ENCODE measurements at regions of chr5 and their contacts with region 1.

Region 1: DNA sequence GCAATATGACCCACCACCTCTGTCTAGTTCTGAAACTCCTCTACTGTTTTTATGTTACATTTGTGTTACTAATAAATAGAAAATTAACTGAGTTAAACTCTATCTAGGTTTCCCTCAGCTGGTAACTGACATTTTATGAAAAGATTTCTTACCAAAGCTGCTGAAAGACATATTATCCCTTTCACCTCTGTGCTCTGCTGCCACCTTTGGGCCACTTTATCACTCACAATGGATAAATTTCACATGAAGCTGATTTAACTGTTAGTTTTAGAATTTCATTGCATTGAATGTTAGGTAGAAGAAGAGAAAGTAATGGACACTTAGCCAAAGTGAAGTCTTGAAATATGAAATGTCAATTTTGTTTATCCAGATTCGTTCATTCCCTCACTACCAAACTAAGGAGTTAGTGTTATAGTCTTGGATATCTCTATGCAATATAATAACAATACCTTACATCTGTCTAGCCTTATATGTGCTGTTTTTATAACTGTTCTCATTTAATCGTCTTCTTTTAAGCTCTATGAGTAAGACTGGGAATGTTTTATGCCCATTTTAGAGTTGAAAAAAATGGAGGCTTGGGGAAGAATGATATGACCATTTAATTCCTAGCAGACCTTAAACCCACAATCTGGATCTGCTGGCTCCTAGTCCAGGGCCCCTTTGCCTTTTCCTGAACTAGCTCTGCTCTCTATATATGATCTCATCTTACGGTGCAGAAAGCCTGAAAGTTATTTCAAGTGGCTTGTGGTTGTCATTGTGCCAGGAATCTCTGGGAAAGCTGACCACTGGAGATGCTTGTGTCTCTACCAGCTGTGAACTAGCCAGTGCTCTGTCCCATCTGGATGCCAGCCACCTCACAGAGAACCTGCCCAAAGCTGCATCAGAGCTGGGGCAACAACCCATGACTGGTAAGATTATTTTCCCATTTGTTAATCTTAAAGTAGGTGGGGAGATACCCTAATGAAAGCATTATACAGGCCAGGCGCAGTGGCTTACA is 97.1 kb downstream of the GOLPH3 start:
- DNase-seq: peak; percentile 52
- H3K27ac ChIP-seq: no peak overlapping the region
- CTCF ChIP-seq: peak; percentile 95

Region 2: DNA sequence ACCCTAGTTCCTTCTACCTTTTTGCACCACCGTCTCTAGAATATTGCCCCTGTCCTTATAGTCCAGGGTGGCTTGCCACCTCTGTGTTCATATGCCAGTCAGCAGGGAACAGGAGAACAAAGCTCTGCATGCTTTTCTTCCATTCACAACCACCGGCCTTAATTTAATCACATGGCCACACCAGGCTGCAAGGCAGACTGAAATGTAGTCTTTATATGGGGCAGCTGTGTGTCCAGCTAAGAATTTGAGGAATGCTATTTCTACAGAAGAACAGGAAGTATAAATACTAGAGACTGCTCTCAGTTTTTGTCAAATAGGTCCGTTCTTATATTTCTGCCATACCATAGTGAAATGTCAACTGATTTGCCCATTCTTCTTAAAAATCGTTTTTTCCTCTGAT is 539.1 kb before region 1 on chr5:
- CTCF ChIA-PET with region 1: no interaction called
- POLR2A ChIA-PET with region 1: no interaction called
- DNase-seq: no peak
- H3K27ac ChIP-seq: no peak overlapping the region
- CTCF ChIP-seq: no peak

Region 3: GRCh38 chr5:31825518-31826068 is 251.4 kb before region 1 on chr5:
- CTCF ChIA-PET with region 1: interaction called, 101 read pairs
- POLR2A ChIA-PET with region 1: no interaction called
- DNase-seq: peak; percentile 61
- H3K27ac ChIP-seq: no peak overlapping the region
- CTCF ChIP-seq: peak; percentile 86

Region 4: GRCh38 chr5:31854181-31855133 is 222.5 kb before region 1 on chr5:
- CTCF ChIA-PET with region 1: interaction called, 21 read pairs
- POLR2A ChIA-PET with region 1: no interaction called
- DNase-seq: peak; percentile 82
- H3K27ac ChIP-seq: peak overlapping the region; percentile 95
- CTCF ChIP-seq: no peak

Region 5: DNA sequence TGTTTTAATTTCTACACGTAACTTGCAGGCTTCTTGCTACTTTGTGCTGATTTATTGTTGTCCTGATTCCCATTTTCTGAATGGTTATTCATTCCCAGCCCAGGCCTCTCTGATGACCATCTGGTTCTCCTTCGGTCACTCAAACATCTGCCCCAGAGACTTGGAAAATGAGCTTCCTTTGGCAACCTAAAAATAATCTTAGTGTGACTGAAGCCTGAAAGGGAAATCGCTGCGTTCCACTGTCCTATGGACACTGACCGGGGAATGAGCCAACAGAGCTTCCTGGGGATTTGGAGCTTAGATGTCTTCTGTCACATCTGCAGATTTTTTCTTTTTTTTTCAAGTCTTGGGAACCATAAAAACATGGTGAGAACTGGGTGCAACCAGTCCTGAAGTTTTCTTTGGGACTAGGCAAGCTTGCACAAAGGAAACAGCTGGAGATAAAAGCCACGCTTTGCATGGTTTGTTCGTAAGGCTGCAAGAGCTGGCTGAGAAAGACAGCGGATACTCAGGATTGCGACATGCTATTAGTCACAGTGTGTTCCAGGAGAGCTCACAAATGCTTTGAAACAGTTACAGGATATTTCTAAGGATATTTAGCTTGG is 49.2 kb before region 1 on chr5:
- CTCF ChIA-PET with region 1: interaction called, 10 read pairs
- POLR2A ChIA-PET with region 1: no interaction called
- DNase-seq: peak; percentile 77
- H3K27ac ChIP-seq: peak overlapping the region; percentile 94
- CTCF ChIP-seq: no peak

Region 6: DNA sequence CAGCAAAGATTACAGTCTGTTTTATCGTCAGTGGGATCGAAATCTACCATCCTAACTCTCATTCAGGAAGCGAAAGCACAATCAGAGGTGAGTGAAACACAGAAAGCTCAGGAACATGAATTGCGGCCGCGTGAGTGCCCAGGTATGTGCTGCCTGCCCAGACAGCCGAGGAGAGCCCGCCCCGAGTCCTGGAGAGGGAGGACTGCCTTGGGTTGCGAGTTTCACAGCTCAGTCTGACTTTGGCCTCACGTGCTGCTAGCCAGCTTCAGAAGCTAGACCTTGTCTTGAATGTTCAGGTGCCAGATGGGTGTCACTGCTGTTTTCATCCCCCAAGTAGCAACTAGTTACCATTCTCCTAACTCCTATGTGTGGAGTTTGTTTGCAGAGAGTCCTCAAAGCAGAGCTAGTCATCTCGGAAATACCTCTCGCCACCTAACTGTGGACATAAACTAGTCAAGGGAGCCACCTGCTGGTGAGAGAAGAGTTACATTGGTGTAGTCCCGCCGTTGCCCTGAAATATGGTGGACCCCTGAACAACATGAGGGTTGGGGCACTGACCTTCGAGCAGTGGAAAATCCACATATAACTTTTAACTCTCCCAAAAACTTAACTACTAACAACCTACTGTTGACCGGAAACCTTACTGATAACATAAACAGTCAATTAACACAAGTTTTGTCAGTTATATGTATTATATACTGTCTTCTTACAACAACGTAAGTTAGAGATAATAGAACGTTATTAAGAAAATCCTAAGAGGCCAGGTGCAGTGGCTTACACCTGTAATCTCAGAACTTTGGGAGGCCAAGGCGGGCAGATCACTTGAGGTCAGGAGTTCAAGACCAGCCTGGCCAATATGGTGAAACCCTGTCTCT is 16.2 kb after region 1 on chr5:
- CTCF ChIA-PET with region 1: interaction called, 13 read pairs
- POLR2A ChIA-PET with region 1: no interaction called
- DNase-seq: peak; percentile 75
- H3K27ac ChIP-seq: 0 out of 2 replicates have a peak overlapping the region, but pooled peaks have one; percentile 29
- CTCF ChIP-seq: peak; percentile 88